ENCODE measurements at regions of chr4 and their contacts with region 1.

Region 1: GRCh38 chr4:81405894-81406401 is 65.8 kb downstream of the RASGEF1B start:
- DNase-seq: peak in 7 of 9 donors; percentile 54 to 80 (median 70)
- ATAC-seq: peak; percentile 88
- H3K4me3 ChIP-seq: no peak overlapping the region
- H3K4me3 Mint-ChIP-seq: peak overlapping the region in 4 of 10 donors; percentile 8 to 56 (median 20)
- H3K27ac ChIP-seq: no peak overlapping the region
- H3K27ac Mint-ChIP-seq: no peak overlapping the region
- H3K4me1 ChIP-seq: no peaks in the 10 kb centered on the region
- H3K4me1 Mint-ChIP-seq: peaks cover 0 to 9% (median 4%) of the 10 kb centered on the region in 7 donors
- H3K27me3 ChIP-seq: no peaks in the 10 kb centered on the region
- H3K27me3 Mint-ChIP-seq: peaks cover 0 to 8% (median 0%) of the 10 kb centered on the region in 5 donors

Region 2: GRCh38 chr4:81913427-81913879 is 507.5 kb after region 1 on chr4:
- CTCF ChIA-PET with region 1: no interaction called
- POLR2A ChIA-PET with region 1: no interaction called
- intact Hi-C with region 1: loop called in 1 of 2 experiments (anchors 5 kb)
- DNase-seq: peak; percentile 18 to 64 (median 58)
- ATAC-seq: peak; percentile 81
- H3K4me3 ChIP-seq: no peak overlapping the region
- H3K4me3 Mint-ChIP-seq: peak overlapping the region in 1 of 10 donors; percentile 4
- H3K27ac ChIP-seq: no peak overlapping the region
- H3K27ac Mint-ChIP-seq: no peak overlapping the region
- H3K4me1 ChIP-seq: no peaks in the 10 kb centered on the region
- H3K4me1 Mint-ChIP-seq: peaks cover 0 to 9% (median 8%) of the 10 kb centered on the region in 7 donors
- H3K27me3 ChIP-seq: no peaks in the 10 kb centered on the region
- H3K27me3 Mint-ChIP-seq: peaks cover 0 to 20% (median 7%) of the 10 kb centered on the region in 5 donors

Region 3: DNA sequence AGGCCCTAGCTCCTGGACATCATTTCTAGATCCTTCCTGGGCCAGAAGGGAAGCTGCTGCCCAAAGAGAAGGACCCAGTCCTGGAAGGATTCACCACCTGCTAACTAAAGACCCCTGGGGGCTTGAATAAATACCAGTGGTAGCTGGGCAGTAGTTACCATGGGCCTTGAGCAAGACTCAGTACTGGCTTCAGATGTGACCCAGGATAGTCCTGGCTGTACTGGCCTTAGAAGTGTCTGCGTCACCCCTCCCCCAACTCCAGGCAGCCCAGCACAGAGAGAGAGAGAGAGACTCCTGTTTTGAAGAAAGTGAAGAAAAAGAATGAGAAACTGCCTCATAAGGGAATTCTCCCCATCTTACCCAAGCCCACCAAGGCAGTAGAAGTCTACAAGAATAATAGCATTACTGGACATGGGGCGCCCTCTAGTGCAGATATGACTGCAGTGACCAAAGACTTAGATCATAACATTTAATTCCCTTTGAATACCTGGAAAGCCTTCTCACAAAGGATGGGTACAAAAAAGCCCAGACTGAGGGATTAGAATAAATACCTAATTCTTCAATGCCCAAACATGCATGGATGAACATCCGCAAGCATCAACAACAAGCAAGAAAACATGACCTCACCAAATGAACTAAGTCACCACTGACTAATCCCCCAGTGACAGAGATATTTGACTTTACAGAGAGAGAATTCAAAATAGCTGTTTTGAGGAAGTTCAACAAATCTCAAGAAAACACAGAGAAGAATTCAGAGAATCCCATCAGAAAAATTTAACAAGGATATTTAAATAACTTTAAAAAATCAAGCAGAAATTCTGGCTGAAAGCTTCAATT is 796.1 kb after region 1 on chr4:
- CTCF ChIA-PET with region 1: interaction called, 3 read pairs
- POLR2A ChIA-PET with region 1: no interaction called
- intact Hi-C with region 1: loop called (anchors 1 kb)
- DNase-seq: peak in 7 of 9 donors; percentile 30 to 54 (median 40)
- ATAC-seq: peak; percentile 70
- H3K4me3 ChIP-seq: no peak overlapping the region
- H3K4me3 Mint-ChIP-seq: no peak overlapping the region
- H3K27ac ChIP-seq: no peak overlapping the region
- H3K27ac Mint-ChIP-seq: no peak overlapping the region
- H3K4me1 ChIP-seq: no peaks in the 10 kb centered on the region
- H3K4me1 Mint-ChIP-seq: peaks cover 0 to 17% (median 3%) of the 10 kb centered on the region in 7 donors
- H3K27me3 ChIP-seq: peaks cover 0 to 4% of the 10 kb centered on the region in 2 donors
- H3K27me3 Mint-ChIP-seq: peaks cover 0 to 18% (median 0%) of the 10 kb centered on the region in 5 donors

Region 4: GRCh38 chr4:82268050-82268825 is 862.3 kb after region 1 on chr4:
- CTCF ChIA-PET with region 1: interaction called, 5 read pairs
- POLR2A ChIA-PET with region 1: no interaction called
- intact Hi-C with region 1: loop called (anchors 1 kb)
- DNase-seq: peak in 7 of 9 donors; percentile 25 to 60 (median 50)
- ATAC-seq: peak; percentile 97
- H3K4me3 ChIP-seq: no peak overlapping the region
- H3K4me3 Mint-ChIP-seq: peak overlapping the region in 8 of 10 donors; percentile 25 to 54 (median 36)
- H3K27ac ChIP-seq: no peak overlapping the region
- H3K27ac Mint-ChIP-seq: peak overlapping the region in 3 of 9 donors; percentile 25 to 79 (median 56)
- H3K4me1 ChIP-seq: peaks cover 0 to 8% of the 10 kb centered on the region in 2 donors
- H3K4me1 Mint-ChIP-seq: peaks cover 11 to 47% (median 28%) of the 10 kb centered on the region in 7 donors
- H3K27me3 ChIP-seq: no peaks in the 10 kb centered on the region
- H3K27me3 Mint-ChIP-seq: peaks cover 0 to 16% (median 0%) of the 10 kb centered on the region in 5 donors

Region 5: GRCh38 chr4:82352913-82353366 is 947.0 kb after region 1 on chr4:
- CTCF ChIA-PET with region 1: no interaction called
- POLR2A ChIA-PET with region 1: no interaction called
- intact Hi-C with region 1: loop called in 1 of 2 experiments (anchors 5 kb)
- DNase-seq: no peak
- ATAC-seq: no peak
- H3K4me3 ChIP-seq: no peak overlapping the region
- H3K4me3 Mint-ChIP-seq: no peak overlapping the region
- H3K27ac ChIP-seq: peak overlapping the region; percentile 7
- H3K27ac Mint-ChIP-seq: peak overlapping the region; percentile 32 to 87 (median 44)
- H3K4me1 ChIP-seq: peaks cover 14 to 22% of the 10 kb centered on the region in 2 donors
- H3K4me1 Mint-ChIP-seq: peaks cover 16 to 67% (median 59%) of the 10 kb centered on the region in 7 donors
- H3K27me3 ChIP-seq: no peaks in the 10 kb centered on the region
- H3K27me3 Mint-ChIP-seq: no peaks in the 10 kb centered on the region

Measured in naive thymus-derived CD4-positive, alpha-beta T cell (primary cell).